ENCODE measurements at regions of chr19 and their contacts with region 1.

Region 1: DNA sequence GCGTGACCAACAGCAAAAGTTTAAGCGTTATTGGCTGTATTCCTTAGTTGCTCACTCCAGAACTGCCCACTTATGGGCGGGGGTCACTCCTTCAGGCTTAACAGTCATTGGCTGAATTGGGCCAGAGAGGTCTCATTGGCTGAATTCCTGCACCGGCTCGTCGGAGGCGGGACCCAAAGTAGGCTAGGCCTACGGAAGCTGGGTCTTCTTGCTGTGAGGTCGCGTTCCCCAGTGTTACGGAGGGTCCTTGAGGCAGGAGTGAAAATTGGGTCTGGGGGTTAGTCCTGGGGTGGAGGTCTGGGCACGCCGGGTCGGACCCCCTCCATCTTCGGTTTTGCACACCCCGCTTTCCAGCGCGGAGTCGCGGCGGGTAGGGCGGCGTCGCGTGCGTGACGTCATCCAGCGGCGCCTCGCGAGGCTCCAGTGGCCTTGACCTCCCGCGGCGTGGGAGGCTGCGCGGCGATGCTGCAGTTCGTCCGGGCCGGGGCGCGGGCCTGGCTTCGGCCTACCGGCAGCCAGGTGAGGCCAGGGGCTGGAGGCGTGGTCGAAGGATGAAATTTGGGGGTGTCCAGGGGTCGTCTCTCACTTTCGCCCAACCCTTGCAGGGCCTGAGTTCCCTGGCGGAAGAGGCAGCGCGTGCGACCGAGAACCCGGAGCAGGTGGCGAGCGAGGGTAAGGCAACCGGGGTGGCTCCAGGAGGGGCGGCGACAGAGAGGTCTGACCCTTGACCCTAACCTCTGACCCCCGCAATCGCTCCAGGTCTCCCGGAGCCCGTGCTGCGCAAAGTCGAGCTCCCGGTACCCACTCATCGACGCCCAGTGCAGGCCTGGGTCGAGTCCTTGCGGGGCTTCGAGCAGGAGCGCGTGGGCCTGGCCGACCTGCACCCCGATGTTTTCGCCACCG is at the start of gene MRPL4:
- DNase-seq: peak; percentile 98
- H3K4me3 Mint-ChIP-seq: peak within 1 kb of the TSS; percentile 97
- H3K27ac Mint-ChIP-seq: peak within 1 kb of the TSS; percentile 95
- H3K4me1 Mint-ChIP-seq: peaks cover 34% of the 10 kb centered on the region
- H3K27me3 Mint-ChIP-seq: no peaks in the 10 kb centered on the region
- total RNA-seq, gene MRPL4: 115 to 116 TPM

Region 2: GRCh38 chr19:9507285-9507684 is 744.8 kb before region 1 on chr19:
- CTCF ChIA-PET with region 1: no interaction called
- intact Hi-C with region 1: no loop called
- DNase-seq: no peak
- H3K4me3 Mint-ChIP-seq: no peak overlapping the region
- H3K27ac Mint-ChIP-seq: no peak overlapping the region
- H3K4me1 Mint-ChIP-seq: no peaks in the 10 kb centered on the region
- H3K27me3 Mint-ChIP-seq: no peaks in the 10 kb centered on the region

Region 3: GRCh38 chr19:10074153-10074552 is 177.9 kb before region 1 on chr19:
- CTCF ChIA-PET with region 1: interaction called, 7 read pairs
- intact Hi-C with region 1: loop called (anchors 1 kb)
- DNase-seq: peak; percentile 67
- H3K4me3 Mint-ChIP-seq: no peak overlapping the region
- H3K27ac Mint-ChIP-seq: no peak overlapping the region
- H3K4me1 Mint-ChIP-seq: no peaks in the 10 kb centered on the region
- H3K27me3 Mint-ChIP-seq: no peaks in the 10 kb centered on the region

Region 4: DNA sequence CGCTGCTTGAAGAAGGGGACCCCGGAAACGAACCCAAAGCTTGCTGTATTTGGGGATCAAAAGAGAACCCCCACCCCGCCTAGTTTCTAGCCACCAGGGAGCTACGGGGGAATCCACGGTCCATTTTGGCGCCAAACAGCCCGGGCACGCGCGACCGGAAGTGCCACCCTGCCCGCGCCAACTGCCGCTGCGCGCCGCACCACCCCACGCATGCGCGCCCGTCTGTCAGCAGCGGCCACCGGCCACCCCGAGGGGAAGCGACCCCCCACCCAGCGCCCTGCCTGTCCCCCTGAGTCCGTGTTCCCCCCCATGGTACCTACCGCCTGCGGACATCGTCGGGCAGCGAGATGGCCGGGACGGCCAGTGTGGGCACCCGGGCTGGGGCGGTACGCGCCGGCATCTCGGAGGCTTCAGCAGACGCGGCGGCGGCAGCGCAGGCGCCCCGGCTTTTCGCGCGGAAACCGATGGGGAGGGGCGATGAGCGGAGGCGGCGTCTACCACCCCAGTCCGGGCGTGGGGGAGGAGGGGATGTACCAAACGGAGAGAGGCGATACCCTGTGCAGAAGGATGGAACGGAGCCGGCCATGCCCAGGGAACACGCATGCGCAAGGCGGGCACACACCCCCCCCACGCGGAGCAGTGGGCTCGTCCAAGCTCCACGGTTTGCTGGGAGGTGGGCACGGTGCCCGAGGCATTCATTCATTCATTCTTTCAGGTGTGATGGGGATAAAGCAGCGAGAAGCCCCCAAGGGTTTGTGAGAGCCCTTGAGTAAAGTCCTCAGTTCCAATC is 57.3 kb before region 1 on chr19 and contains the start of gene DNMT1:
- CTCF ChIA-PET with region 1: interaction called, 11 read pairs
- intact Hi-C with region 1: loop called (anchors 1 kb)
- DNase-seq: peak; percentile 99
- H3K4me3 Mint-ChIP-seq: peak within 1 kb of the TSS; percentile 99
- H3K27ac Mint-ChIP-seq: peak within 1 kb of the TSS; percentile 98
- H3K4me1 Mint-ChIP-seq: peaks cover 46% of the 10 kb centered on the region
- H3K27me3 Mint-ChIP-seq: no peaks in the 10 kb centered on the region
- total RNA-seq, gene DNMT1: 365 to 371 TPM

Region 5: GRCh38 chr19:10237702-10238101 is 14.3 kb before region 1 on chr19:
- CTCF ChIA-PET with region 1: interaction called, 58 read pairs
- intact Hi-C with region 1: no loop called
- DNase-seq: no peak
- H3K4me3 Mint-ChIP-seq: no peak overlapping the region
- H3K27ac Mint-ChIP-seq: no peak overlapping the region
- H3K4me1 Mint-ChIP-seq: peaks cover 19% of the 10 kb centered on the region
- H3K27me3 Mint-ChIP-seq: no peaks in the 10 kb centered on the region

Measured in activated naive CD4-positive, alpha-beta T cell treated with anti-CD3 and anti-CD28 coated beads for 36 hours (primary cell).